ENCODE measurements at regions of chr20 and their contacts with region 1.

Region 1: GRCh38 chr20:23889775-23890211 is 10.2 kb upstream of the CST5 start:
- DNase-seq: peak; percentile 60 to 86
- ATAC-seq: peak; percentile 83 to 98 (median 96)
- H3K4me3 ChIP-seq: no peak overlapping the region
- H3K4me3 Mint-ChIP-seq: no peak overlapping the region
- H3K27ac ChIP-seq: no peak overlapping the region
- H3K27ac Mint-ChIP-seq: no peak overlapping the region
- H3K4me1 ChIP-seq: peaks cover 6% of the 10 kb centered on the region
- H3K4me1 Mint-ChIP-seq: no peaks in the 10 kb centered on the region
- H3K27me3 ChIP-seq: peaks cover 2% of the 10 kb centered on the region
- H3K27me3 Mint-ChIP-seq: peaks cover 16 to 24% of the 10 kb centered on the region in 2 donors
- CTCF ChIP-seq: peak; percentile 72

Region 2: GRCh38 chr20:23939641-23940040 is 49.8 kb after region 1 on chr20:
- intact Hi-C with region 1: no loop called
- DNase-seq: no peak
- ATAC-seq: no peak
- H3K4me3 ChIP-seq: no peak overlapping the region
- H3K4me3 Mint-ChIP-seq: no peak overlapping the region
- H3K27ac ChIP-seq: no peak overlapping the region
- H3K27ac Mint-ChIP-seq: no peak overlapping the region
- H3K4me1 ChIP-seq: peaks cover 4% of the 10 kb centered on the region
- H3K4me1 Mint-ChIP-seq: no peaks in the 10 kb centered on the region
- H3K27me3 ChIP-seq: no peaks in the 10 kb centered on the region
- H3K27me3 Mint-ChIP-seq: peaks cover 19% of the 10 kb centered on the region in 2 donors
- CTCF ChIP-seq: no peak

Region 3: DNA sequence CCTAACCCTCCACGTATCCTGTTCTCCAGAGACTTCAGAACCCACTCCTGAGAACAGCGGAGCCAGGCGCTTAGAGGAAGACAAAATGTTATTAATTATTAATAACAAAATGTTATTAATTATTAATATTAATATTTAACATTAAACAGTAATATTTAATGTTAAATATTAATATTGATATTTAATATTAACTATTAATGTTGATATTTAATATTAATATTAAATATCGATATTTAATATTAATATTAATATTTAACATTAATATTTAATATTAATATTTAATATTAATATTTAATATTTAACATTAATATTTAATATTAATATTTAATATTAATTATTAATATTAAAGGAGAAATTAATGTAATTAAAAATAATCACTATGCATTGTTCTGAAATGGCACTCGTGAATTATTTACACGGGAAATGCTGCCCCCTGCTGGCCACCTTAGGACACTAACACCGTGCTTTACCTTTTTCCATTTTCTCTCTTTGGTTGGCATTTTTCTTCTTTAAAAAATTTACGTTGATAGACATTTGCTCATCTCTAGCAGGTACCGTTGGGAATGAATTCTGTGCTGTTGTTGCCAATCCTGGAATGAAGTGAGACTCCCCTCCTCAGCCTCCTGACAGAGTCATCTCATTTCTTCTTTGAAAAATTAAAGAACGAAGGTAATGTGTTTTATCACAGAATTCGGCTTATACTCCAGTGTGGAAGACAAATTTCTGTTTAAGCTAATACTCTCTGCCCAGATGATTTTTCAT is 106.3 kb after region 1 on chr20:
- intact Hi-C with region 1: loop called (anchors 10 kb)
- DNase-seq: peak; percentile 31 to 82
- ATAC-seq: peak in 2 of 3 donors; percentile 47 to 64
- H3K4me3 ChIP-seq: no peak overlapping the region
- H3K4me3 Mint-ChIP-seq: no peak overlapping the region
- H3K27ac ChIP-seq: no peak overlapping the region
- H3K27ac Mint-ChIP-seq: no peak overlapping the region
- H3K4me1 ChIP-seq: no peaks in the 10 kb centered on the region
- H3K4me1 Mint-ChIP-seq: peaks cover 0 to 4% of the 10 kb centered on the region in 2 donors
- H3K27me3 ChIP-seq: no peaks in the 10 kb centered on the region
- H3K27me3 Mint-ChIP-seq: peaks cover 9 to 10% of the 10 kb centered on the region in 2 donors
- CTCF ChIP-seq: peak; percentile 67

Region 4: GRCh38 chr20:24100385-24101011 is 210.7 kb after region 1 on chr20:
- intact Hi-C with region 1: loop called (anchors 2 kb)
- DNase-seq: peak; percentile 51 to 80
- ATAC-seq: peak; percentile 91 to 97 (median 95)
- H3K4me3 ChIP-seq: no peak overlapping the region
- H3K4me3 Mint-ChIP-seq: no peak overlapping the region
- H3K27ac ChIP-seq: no peak overlapping the region
- H3K27ac Mint-ChIP-seq: peak overlapping the region in 1 of 2 donors; percentile 76
- H3K4me1 ChIP-seq: peaks cover 10% of the 10 kb centered on the region
- H3K4me1 Mint-ChIP-seq: peaks cover 23 to 27% of the 10 kb centered on the region in 2 donors
- H3K27me3 ChIP-seq: no peaks in the 10 kb centered on the region
- H3K27me3 Mint-ChIP-seq: peaks cover 8% of the 10 kb centered on the region in 2 donors
- CTCF ChIP-seq: peak; percentile 70

Region 5: GRCh38 chr20:24164360-24164759 is 274.6 kb after region 1 on chr20:
- intact Hi-C with region 1: loop called (anchors 1 kb)
- DNase-seq: peak; percentile 44 to 58
- ATAC-seq: peak in 2 of 3 donors; percentile 58 to 72
- H3K4me3 ChIP-seq: no peak overlapping the region
- H3K4me3 Mint-ChIP-seq: no peak overlapping the region
- H3K27ac ChIP-seq: no peak overlapping the region
- H3K27ac Mint-ChIP-seq: no peak overlapping the region
- H3K4me1 ChIP-seq: peaks cover 9% of the 10 kb centered on the region
- H3K4me1 Mint-ChIP-seq: peaks cover 11 to 26% of the 10 kb centered on the region in 2 donors
- H3K27me3 ChIP-seq: no peaks in the 10 kb centered on the region
- H3K27me3 Mint-ChIP-seq: peaks cover 3 to 7% of the 10 kb centered on the region in 2 donors
- CTCF ChIP-seq: peak; percentile 82